Ovary (tissue), 10 donors: ENCODE measurements at regions of chr11 and their contacts with region 1.

Region 1: DNA sequence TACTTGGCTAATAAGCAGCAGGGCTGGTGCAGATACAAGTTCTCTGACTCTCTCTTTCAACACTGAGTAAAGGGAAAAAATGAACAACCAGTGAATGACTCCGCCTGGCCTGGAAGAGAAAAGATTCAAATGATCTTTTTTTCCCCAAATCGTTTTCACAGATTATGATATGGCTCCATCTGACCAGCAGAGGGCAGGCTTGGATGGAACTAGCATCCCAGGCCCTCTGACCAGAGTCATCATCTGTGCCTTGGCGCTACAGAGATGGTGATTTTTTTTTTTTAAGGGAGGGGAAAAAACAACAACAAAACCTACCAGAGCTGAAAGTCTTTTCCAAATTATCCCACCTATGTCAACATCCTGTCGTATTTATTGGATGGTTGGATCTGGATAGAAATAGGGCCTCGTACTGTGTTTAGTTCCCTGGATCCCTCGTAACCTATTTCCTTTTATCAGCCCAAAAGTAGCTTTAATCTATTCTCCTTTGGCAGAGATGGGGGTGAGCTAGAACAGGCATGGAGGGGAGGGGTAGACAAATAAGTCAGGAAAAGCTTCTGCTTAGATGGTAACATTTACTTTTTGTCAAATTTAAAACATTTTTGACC is 69.7 kb downstream of the PRSS23 start:
- DNase-seq: peak; percentile 46 to 81 (median 70)
- H3K4me3 ChIP-seq: no peak overlapping the region
- H3K27ac ChIP-seq: no peak overlapping the region
- H3K4me1 ChIP-seq: peaks cover 3% of the 10 kb centered on the region
- H3K27me3 ChIP-seq: no peaks in the 10 kb centered on the region
- CTCF ChIP-seq: peak; percentile 53 to 71 (median 63)
- EP300 ChIP-seq: no peak
- POLR2A ChIP-seq: no peak

Region 2: GRCh38 chr11:86919557-86920210 is 49.6 kb after region 1 on chr11:
- intact Hi-C with region 1: loop called in 2 of 4 experiments (anchors 1 to 5 kb)
- DNase-seq: no peak
- H3K4me3 ChIP-seq: no peak overlapping the region
- H3K27ac ChIP-seq: peak overlapping the region in 1 of 2 donors; percentile 22
- H3K4me1 ChIP-seq: peaks cover 10% of the 10 kb centered on the region
- H3K27me3 ChIP-seq: no peaks in the 10 kb centered on the region
- CTCF ChIP-seq: peak; percentile 19 to 69 (median 65)
- EP300 ChIP-seq: no peak
- POLR2A ChIP-seq: no peak

Region 3: GRCh38 chr11:87290304-87290922 is 420.3 kb after region 1 on chr11:
- intact Hi-C with region 1: loop called in 1 of 4 experiments (anchors 5 kb)
- DNase-seq: no peak
- H3K4me3 ChIP-seq: no peak overlapping the region
- H3K27ac ChIP-seq: no peak overlapping the region
- H3K4me1 ChIP-seq: no peaks in the 10 kb centered on the region
- H3K27me3 ChIP-seq: no peaks in the 10 kb centered on the region
- CTCF ChIP-seq: peak; percentile 41 to 67 (median 44)
- EP300 ChIP-seq: no peak
- POLR2A ChIP-seq: no peak